ENCODE measurements at regions of chr1 and their contacts with region 1.

Region 1: GRCh38 chr1:39538588-39539465 is 37.8 kb downstream of the PABPC4 start:
- DNase-seq: peak; percentile 61 to 75
- H3K4me3 ChIP-seq: no peak overlapping the region
- H3K4me3 Mint-ChIP-seq: no peak overlapping the region
- H3K27ac Mint-ChIP-seq: no peak overlapping the region
- H3K4me1 ChIP-seq: no peaks in the 10 kb centered on the region
- H3K4me1 Mint-ChIP-seq: no peaks in the 10 kb centered on the region
- H3K27me3 ChIP-seq: no peaks in the 10 kb centered on the region
- H3K27me3 Mint-ChIP-seq: no peaks in the 10 kb centered on the region
- CTCF ChIP-seq: peak; percentile 61 to 70

Region 2: DNA sequence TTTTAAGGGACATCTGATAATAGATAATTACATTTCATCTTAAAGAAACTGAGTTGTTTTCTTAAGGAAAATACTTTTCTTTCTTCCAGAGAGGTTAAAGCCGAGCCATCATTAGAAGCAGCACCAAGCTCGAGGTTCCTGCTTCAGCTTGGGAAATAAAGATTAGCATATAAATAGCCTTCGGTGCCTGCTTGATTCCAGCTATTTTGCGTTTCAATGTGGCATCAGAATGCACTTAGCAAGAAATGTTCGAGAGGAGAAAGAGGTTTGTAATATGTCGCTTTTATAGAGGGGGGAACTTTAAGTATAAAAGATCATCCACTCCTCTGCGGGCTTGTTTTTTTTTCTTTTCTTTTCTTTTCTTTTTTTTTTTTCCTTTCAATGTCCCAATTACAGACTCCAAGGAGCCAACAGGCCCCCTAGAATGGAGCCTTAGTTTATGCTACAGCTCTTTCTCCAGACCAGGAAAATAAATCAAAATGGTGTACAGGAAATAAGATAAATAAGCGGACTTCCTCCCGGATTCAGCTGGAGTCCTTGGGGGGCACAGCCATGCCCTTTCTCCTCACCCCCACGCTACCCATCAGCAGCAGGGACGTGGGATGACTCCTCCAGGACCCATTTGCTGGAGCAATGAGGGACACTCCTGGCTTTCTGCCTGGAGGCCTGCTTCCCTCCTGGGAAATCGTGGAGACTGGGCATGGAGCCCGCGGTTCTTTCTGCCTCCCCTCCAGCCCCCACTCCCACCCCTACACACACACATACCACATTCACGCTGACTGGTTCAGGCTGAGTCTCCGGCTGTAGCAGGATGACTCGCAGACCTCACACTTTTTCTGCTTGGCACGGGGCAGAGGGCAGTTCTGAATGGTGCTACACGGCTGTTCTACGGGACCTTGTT is 810.9 kb before region 1 on chr1:
- CTCF ChIA-PET with region 1: no interaction called
- POLR2A ChIA-PET with region 1: no interaction called
- intact Hi-C with region 1: no loop called
- DNase-seq: no peak
- H3K4me3 ChIP-seq: no peak overlapping the region
- H3K4me3 Mint-ChIP-seq: no peak overlapping the region
- H3K27ac Mint-ChIP-seq: no peak overlapping the region
- H3K4me1 ChIP-seq: no peaks in the 10 kb centered on the region
- H3K4me1 Mint-ChIP-seq: no peaks in the 10 kb centered on the region
- H3K27me3 ChIP-seq: no peaks in the 10 kb centered on the region
- H3K27me3 Mint-ChIP-seq: peaks cover 7% of the 10 kb centered on the region
- CTCF ChIP-seq: no peak

Region 3: GRCh38 chr1:39098546-39099250 is 440.1 kb before region 1 on chr1:
- CTCF ChIA-PET with region 1: interaction called, 10 read pairs
- POLR2A ChIA-PET with region 1: no interaction called
- intact Hi-C with region 1: no loop called
- DNase-seq: peak; percentile 70
- H3K4me3 ChIP-seq: no peak overlapping the region
- H3K4me3 Mint-ChIP-seq: no peak overlapping the region
- H3K27ac Mint-ChIP-seq: no peak overlapping the region
- H3K4me1 ChIP-seq: peaks cover 4% of the 10 kb centered on the region; the same call in 1 of the 2 replicates
- H3K4me1 Mint-ChIP-seq: peaks cover 5% of the 10 kb centered on the region
- H3K27me3 ChIP-seq: no peaks in the 10 kb centered on the region
- H3K27me3 Mint-ChIP-seq: no peaks in the 10 kb centered on the region
- CTCF ChIP-seq: peak; percentile 42 to 54

Region 4: GRCh38 chr1:39469150-39469549 is 69.7 kb before region 1 on chr1:
- CTCF ChIA-PET with region 1: interaction called, 18 read pairs
- POLR2A ChIA-PET with region 1: no interaction called
- intact Hi-C with region 1: loop called (anchors 5 kb)
- DNase-seq: peak in 1 of 2 experiments; percentile 4
- H3K4me3 ChIP-seq: no peak overlapping the region
- H3K4me3 Mint-ChIP-seq: no peak overlapping the region
- H3K27ac Mint-ChIP-seq: no peak overlapping the region
- H3K4me1 ChIP-seq: no peaks in the 10 kb centered on the region
- H3K4me1 Mint-ChIP-seq: no peaks in the 10 kb centered on the region
- H3K27me3 ChIP-seq: no peaks in the 10 kb centered on the region
- H3K27me3 Mint-ChIP-seq: no peaks in the 10 kb centered on the region
- CTCF ChIP-seq: no peak

Region 5: GRCh38 chr1:39474810-39475209 is 64.0 kb before region 1 on chr1:
- CTCF ChIA-PET with region 1: interaction called, 18 read pairs
- POLR2A ChIA-PET with region 1: no interaction called
- intact Hi-C with region 1: loop called (anchors 5 kb)
- DNase-seq: no peak
- H3K4me3 ChIP-seq: no peak overlapping the region
- H3K4me3 Mint-ChIP-seq: no peak overlapping the region
- H3K27ac Mint-ChIP-seq: no peak overlapping the region
- H3K4me1 ChIP-seq: no peaks in the 10 kb centered on the region
- H3K4me1 Mint-ChIP-seq: no peaks in the 10 kb centered on the region
- H3K27me3 ChIP-seq: no peaks in the 10 kb centered on the region
- H3K27me3 Mint-ChIP-seq: no peaks in the 10 kb centered on the region
- CTCF ChIP-seq: no peak

Region 6: DNA sequence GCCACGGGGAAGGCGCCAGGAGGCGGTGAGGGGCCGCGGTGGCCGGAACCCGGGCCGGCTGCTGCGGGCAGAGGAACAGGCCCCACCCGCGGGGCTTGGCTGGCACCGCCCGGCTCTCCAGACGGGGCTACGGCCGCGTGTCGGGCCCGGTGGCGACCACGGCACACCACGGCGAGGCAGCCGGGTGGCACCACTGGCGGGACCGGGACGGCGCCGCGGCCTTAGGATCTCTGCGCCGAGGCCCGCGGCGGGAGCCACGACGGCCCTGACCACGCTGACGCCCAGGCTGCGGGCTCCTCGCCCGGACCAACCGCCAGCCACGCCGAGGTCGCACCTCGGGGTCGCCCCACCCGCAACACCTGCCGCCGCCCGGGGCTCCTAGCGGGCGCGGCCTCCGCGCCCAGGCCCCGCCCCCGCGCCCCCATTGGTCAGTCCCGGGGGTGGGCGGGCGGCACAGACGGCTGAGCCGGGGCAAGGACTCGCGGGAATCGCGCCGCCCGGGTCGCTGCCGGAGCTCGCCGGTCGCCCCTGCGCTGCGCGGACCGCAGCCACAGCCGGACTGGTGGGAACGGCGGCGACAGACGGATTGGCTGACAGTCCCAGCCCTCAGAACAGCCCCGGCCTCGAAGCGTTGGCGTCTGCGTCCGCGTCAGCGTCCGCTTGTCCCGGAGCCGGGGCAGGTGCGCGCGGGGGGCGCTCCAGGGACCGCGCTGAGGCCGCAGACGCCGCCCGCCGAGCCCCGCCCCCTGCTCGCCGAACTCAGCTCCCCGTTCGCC is 47.5 kb before region 1 on chr1 and contains the start of gene BMP8A:
- CTCF ChIA-PET with region 1: interaction called, 10 read pairs
- POLR2A ChIA-PET with region 1: no interaction called
- intact Hi-C with region 1: no loop called
- DNase-seq: peak; percentile 74 to 84
- H3K4me3 ChIP-seq: peak within 1 kb of the TSS; percentile 67
- H3K4me3 Mint-ChIP-seq: peak within 1 kb of the TSS; percentile 63
- H3K27ac Mint-ChIP-seq: no peak within 1 kb of the TSS
- H3K4me1 ChIP-seq: no peaks in the 10 kb centered on the region
- H3K4me1 Mint-ChIP-seq: no peaks in the 10 kb centered on the region
- H3K27me3 ChIP-seq: no peaks in the 10 kb centered on the region
- H3K27me3 Mint-ChIP-seq: no peaks in the 10 kb centered on the region
- CTCF ChIP-seq: no peak
- total RNA-seq, gene BMP8A: 3.2 and 3.6 TPM in 2 replicates

Region 7: GRCh38 chr1:39505289-39505688 is 33.5 kb before region 1 on chr1:
- CTCF ChIA-PET with region 1: interaction called, 6 read pairs
- POLR2A ChIA-PET with region 1: no interaction called
- intact Hi-C with region 1: loop called (anchors 1 kb)
- DNase-seq: no peak
- H3K4me3 ChIP-seq: no peak overlapping the region
- H3K4me3 Mint-ChIP-seq: no peak overlapping the region
- H3K27ac Mint-ChIP-seq: no peak overlapping the region
- H3K4me1 ChIP-seq: peaks cover 28% of the 10 kb centered on the region
- H3K4me1 Mint-ChIP-seq: no peaks in the 10 kb centered on the region
- H3K27me3 ChIP-seq: no peaks in the 10 kb centered on the region
- H3K27me3 Mint-ChIP-seq: no peaks in the 10 kb centered on the region
- CTCF ChIP-seq: no peak

Region 8: GRCh38 chr1:39575191-39576015 is 36.6 kb after region 1 on chr1:
- CTCF ChIA-PET with region 1: no interaction called
- POLR2A ChIA-PET with region 1: no interaction called
- intact Hi-C with region 1: no loop called
- DNase-seq: peak in 1 of 2 experiments; percentile 19
- H3K4me3 ChIP-seq: peak overlapping the region; percentile 77
- H3K4me3 Mint-ChIP-seq: peak overlapping the region; percentile 77
- H3K27ac Mint-ChIP-seq: peak overlapping the region; percentile 50
- H3K4me1 ChIP-seq: no peaks in the 10 kb centered on the region; the same call in none of the 2 replicates
- H3K4me1 Mint-ChIP-seq: no peaks in the 10 kb centered on the region
- H3K27me3 ChIP-seq: no peaks in the 10 kb centered on the region
- H3K27me3 Mint-ChIP-seq: no peaks in the 10 kb centered on the region
- CTCF ChIP-seq: no peak

Measured in Caco-2 (cell line).